Activated CD4-positive, alpha-beta T cell treated with anti-CD3 and anti-CD28 coated beads, Interleukin-2, amount 10 ng/mL, durations not matched to agents 7 days and 5 days (primary cell): ENCODE measurements at regions of chr13 and their contacts with region 1.

Region 1: DNA sequence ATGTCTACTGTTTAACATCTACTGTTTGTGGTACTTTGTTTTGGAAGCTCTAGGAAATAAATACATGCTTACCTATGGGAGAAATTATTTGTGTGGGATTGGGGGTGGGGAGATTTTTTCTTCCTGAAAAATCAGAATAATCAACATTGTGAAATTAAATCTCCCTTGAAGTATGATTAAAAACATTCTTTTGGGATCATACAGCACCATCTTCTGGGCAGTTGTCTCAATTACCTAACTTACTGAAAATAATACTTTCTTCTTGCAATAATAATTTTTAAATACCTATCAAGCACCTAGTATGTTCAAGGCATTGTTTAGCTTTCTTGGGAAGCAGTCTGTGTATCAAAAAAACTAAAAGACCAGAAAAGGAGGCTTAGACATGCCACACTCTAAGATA is 576.5 kb upstream of the ARGLU1 start:
- DNase-seq: no peak
- H3K4me3 Mint-ChIP-seq: no peak overlapping the region
- H3K27ac Mint-ChIP-seq: no peak overlapping the region
- H3K4me1 Mint-ChIP-seq: no peaks in the 10 kb centered on the region
- H3K27me3 Mint-ChIP-seq: no peaks in the 10 kb centered on the region

Region 2: GRCh38 chr13:107157271-107157670 is 12.8 kb after region 1 on chr13:
- CTCF ChIA-PET with region 1: interaction called, 11 read pairs
- POLR2A ChIA-PET with region 1: no interaction called
- DNase-seq: no peak
- H3K4me3 Mint-ChIP-seq: no peak overlapping the region
- H3K27ac Mint-ChIP-seq: no peak overlapping the region
- H3K4me1 Mint-ChIP-seq: no peaks in the 10 kb centered on the region
- H3K27me3 Mint-ChIP-seq: no peaks in the 10 kb centered on the region